ENCODE measurements at regions of chr4 and their contacts with region 1.

Region 1: GRCh38 chr4:2262143-2262943 is 434 bp upstream of the MXD4 start:
- DNase-seq: peak; percentile 100
- H3K4me3 ChIP-seq: peak overlapping the region; percentile 91 to 96 (median 93)
- H3K27ac ChIP-seq: peak overlapping the region; percentile 93 to 96 (median 95)
- H3K4me1 ChIP-seq: peaks cover 64 to 88% (median 77%) of the 10 kb centered on the region in 4 donors
- H3K27me3 ChIP-seq: no peaks in the 10 kb centered on the region
- CTCF ChIP-seq: no peak
- EP300 ChIP-seq: no peak
- POLR2A ChIP-seq: peak; percentile 95

Region 2: GRCh38 chr4:1746265-1746691 is 516.1 kb before region 1 on chr4:
- intact Hi-C with region 1: no loop called
- DNase-seq: no peak
- H3K4me3 ChIP-seq: no peak overlapping the region
- H3K27ac ChIP-seq: no peak overlapping the region
- H3K4me1 ChIP-seq: peaks cover 0 to 7% (median 5%) of the 10 kb centered on the region in 4 donors
- H3K27me3 ChIP-seq: peaks cover 0 to 44% (median 2%) of the 10 kb centered on the region in 4 donors
- CTCF ChIP-seq: peak; percentile 59 to 77 (median 69)
- EP300 ChIP-seq: no peak
- POLR2A ChIP-seq: no peak

Region 3: GRCh38 chr4:2241410-2242353 is 20.7 kb before region 1 on chr4 and contains the starts of genes HAUS3 and POLN:
- intact Hi-C with region 1: loop called (anchors 2 kb)
- DNase-seq: peak; percentile 99
- H3K4me3 ChIP-seq: peak within 1 kb of the TSS; percentile 75 to 94 (median 84)
- H3K27ac ChIP-seq: peak within 1 kb of the TSS; percentile 77 to 89 (median 82)
- H3K4me1 ChIP-seq: peaks cover 51 to 90% (median 82%) of the 10 kb centered on the region in 4 donors
- H3K27me3 ChIP-seq: no peaks in the 10 kb centered on the region
- CTCF ChIP-seq: no peak
- EP300 ChIP-seq: no peak
- POLR2A ChIP-seq: peak; percentile 65
- total RNA-seq, gene HAUS3: 9.9 to 14.1 (median 11.3) TPM
- total RNA-seq, gene POLN: 1.2 to 3.3 (median 2.7) TPM

Region 4: DNA sequence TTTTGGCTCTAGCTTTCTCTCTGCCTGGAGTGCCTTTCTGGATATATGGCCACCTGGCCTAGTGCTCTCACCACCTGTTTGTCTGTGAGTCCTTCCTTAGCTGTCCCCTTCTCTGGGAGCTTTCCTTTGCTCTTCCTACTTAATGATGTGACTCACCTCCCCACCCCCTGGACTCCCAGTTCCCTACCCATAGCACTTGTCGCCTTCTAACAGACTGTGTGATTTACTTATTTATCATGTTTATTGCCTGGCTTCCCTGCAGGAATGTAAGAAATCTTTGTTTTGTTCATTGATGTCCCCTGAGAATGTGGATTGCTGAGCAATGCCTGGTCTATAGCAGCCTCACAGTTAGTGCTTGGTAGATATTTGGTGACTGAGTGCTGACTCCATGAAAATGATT is 600.2 kb after region 1 on chr4:
- intact Hi-C with region 1: no loop called
- DNase-seq: no peak
- H3K4me3 ChIP-seq: peak overlapping the region in 3 of 4 donors; percentile 1 to 21 (median 3)
- H3K27ac ChIP-seq: peak overlapping the region; percentile 49 to 63 (median 59)
- H3K4me1 ChIP-seq: peaks cover 99 to 100% (median 100%) of the 10 kb centered on the region in 4 donors
- H3K27me3 ChIP-seq: no peaks in the 10 kb centered on the region
- CTCF ChIP-seq: no peak
- EP300 ChIP-seq: no peak
- POLR2A ChIP-seq: no peak